ENCODE measurements at regions of chr1 and their contacts with region 1.

Region 1: DNA sequence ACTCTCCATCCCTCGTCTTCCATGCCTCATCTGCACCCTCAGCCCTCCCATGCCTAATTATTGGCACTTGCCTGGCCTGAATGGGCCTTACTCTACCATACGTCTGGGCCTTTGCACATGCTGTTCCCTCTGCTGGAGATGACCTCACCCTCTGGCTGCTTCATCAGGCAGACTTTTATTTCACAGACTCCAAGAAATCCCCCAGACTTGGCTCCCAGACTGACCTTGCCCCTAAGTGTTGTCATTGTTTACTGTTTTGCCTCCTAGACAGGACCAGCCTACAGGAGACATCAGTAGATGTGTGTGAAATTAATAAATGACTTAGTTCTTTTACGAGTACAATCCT is 5.2 kb upstream of the AHDC1 start:
- DNase-seq: no peak
- ATAC-seq: peak; percentile 18
- H3K4me3 Mint-ChIP-seq: no peak overlapping the region
- H3K27ac Mint-ChIP-seq: no peak overlapping the region
- H3K4me1 Mint-ChIP-seq: peaks cover 15% of the 10 kb centered on the region
- H3K27me3 Mint-ChIP-seq: no peaks in the 10 kb centered on the region
- CTCF ChIP-seq: no peak

Region 2: DNA sequence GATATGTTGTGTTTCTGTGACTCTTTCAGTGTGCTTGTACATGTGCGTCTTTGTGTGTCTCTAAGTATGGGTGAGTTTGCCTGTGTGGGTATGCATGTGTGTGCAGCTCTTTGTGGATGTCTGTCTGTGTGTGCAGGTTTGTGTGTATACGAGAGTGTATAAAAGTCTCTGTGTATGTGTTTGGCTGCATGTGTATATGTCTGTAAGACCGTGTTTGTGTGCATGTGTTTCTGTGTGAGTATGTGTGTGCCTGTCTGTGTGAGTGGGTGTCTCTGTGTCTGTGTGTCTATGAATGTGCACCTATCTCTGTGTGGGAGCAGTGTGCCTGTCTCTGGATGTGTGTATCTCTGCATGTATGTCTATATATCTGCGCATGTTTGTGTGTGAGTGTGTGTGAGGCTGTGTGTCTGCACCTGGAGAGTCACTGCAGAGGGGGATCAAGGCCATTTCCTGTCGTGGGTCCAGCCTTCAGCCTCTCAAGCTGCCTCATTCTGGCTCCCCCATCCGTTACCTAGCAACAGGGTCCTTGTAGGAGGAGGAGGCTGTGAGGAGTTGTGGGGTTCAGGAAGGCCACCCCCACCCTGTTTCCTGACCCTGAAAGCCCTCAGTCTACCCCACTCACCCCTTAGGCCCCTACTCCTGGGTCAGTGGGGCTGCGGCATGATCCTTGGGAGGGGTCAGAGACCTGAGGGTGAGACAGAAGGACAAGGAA is 15.4 kb after region 1 on chr1:
- CTCF ChIA-PET with region 1: interaction called, 17 read pairs
- POLR2A ChIA-PET with region 1: interaction called, 11 read pairs
- intact Hi-C with region 1: loop called (anchors 1 kb)
- DNase-seq: no peak
- ATAC-seq: no peak
- H3K4me3 Mint-ChIP-seq: no peak overlapping the region
- H3K27ac Mint-ChIP-seq: no peak overlapping the region
- H3K4me1 Mint-ChIP-seq: peaks cover 35% of the 10 kb centered on the region
- H3K27me3 Mint-ChIP-seq: no peaks in the 10 kb centered on the region
- CTCF ChIP-seq: no peak

Region 3: DNA sequence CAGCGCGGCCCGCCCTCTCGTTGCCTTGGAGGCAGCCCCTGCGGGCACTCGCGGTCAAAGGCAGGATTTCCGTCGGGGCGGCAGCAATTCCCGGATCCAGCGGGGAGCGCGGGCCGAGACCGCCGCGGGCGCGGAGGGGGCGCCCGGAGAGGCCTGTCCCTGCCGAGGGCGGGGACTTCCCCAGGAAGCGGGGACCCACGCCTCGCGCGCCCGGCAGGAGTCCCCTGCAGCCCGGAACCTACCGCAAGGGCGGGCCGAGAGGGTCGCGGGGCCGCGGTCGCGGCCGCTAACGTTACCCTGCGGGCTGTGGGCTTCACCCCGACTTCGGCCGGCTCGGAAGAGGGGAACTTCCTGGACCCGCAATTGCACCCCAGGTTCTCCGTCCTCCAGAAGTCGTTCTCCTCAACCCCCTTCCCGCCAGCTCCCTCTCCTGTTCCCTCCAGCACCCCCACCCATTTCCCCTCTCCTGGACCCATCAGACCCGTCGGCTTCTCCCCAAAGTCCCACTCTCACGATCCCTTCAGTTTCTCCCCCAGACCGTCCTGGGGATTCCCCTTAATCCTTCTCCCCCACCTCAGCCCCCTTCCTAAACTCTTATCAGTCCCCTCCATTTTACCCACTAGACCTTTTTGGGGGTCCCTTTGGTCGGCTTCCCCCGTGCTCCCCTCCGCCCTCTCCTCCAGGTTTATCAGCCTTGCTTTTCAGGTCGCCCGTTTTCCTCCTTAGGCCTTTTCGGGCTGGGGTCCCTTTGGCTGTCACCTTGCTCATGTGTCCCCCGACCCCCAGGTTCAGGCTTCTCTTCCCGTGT is 25.2 kb after region 1 on chr1:
- CTCF ChIA-PET with region 1: interaction called, 8 read pairs
- POLR2A ChIA-PET with region 1: interaction called, 20 read pairs
- intact Hi-C with region 1: loop called (anchors 1 kb)
- DNase-seq: peak; percentile 64
- ATAC-seq: peak; percentile 16
- H3K4me3 Mint-ChIP-seq: peak overlapping the region; percentile 83
- H3K27ac Mint-ChIP-seq: peak overlapping the region; percentile 87
- H3K4me1 Mint-ChIP-seq: peaks cover 89% of the 10 kb centered on the region
- H3K27me3 Mint-ChIP-seq: no peaks in the 10 kb centered on the region
- CTCF ChIP-seq: no peak

Region 4: DNA sequence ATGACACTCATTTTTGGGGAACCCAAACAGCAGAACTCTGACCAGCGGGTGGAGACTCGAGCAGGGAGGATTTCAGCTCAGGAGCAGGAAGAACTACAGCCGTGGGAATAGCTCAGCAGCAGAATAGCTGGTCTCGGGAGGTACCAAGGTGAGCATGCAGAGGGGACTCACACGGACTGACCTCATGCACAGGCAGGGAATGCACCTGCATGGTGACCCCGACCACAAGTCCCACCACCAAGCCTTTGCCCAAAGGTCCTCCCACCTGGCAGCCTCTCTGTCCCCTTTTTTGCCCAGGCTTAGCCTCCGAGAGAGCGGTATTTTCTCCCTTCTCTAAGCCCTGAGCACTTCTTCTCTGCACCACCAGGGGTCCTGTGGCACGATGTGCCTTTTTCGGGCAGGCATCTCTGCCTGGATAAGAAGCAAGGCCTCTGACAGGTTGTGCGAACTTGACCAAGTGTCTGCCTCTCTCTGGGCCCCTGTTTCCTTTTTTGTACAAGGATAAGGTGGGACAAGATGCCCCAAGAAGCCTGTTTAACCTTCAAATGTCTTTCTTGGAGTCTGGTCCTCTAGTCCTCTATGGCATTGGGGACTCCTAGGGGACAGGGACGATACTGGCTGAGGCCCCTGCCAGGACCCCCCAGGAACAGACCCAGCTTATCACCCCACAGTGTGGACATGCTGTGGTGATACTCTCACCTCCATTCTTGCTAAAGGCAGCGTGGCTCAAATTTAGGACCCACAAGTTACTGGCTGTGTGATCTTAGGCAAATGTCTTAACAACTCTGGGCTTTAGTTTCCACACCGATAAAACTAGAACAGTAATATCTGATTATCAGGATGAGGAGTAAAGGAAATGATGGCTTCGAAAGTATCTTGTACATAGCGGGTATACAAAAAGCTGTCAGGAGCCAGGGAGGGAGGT is 34.8 kb after region 1 on chr1:
- CTCF ChIA-PET with region 1: interaction called, 21 read pairs
- POLR2A ChIA-PET with region 1: interaction called, 3 read pairs
- intact Hi-C with region 1: loop called (anchors 1 kb)
- DNase-seq: peak; percentile 53
- ATAC-seq: peak; percentile 99
- H3K4me3 Mint-ChIP-seq: no peak overlapping the region
- H3K27ac Mint-ChIP-seq: peak overlapping the region; percentile 46
- H3K4me1 Mint-ChIP-seq: peaks cover 15% of the 10 kb centered on the region
- H3K27me3 Mint-ChIP-seq: no peaks in the 10 kb centered on the region
- CTCF ChIP-seq: no peak